Breast epithelium (tissue), 4 donors: ENCODE measurements at regions of chr19 and their contacts with region 1.

Region 1: GRCh38 chr19:11422163-11423021 is 3.3 kb upstream of the RGL3 start:
- DNase-seq: peak; percentile 78 to 88
- H3K4me3 ChIP-seq: peak overlapping the region; percentile 2 to 54 (median 42)
- H3K27ac ChIP-seq: peak overlapping the region; percentile 39 to 61
- H3K4me1 ChIP-seq: no peaks in the 10 kb centered on the region
- H3K27me3 ChIP-seq: peaks cover 4 to 21% of the 10 kb centered on the region in 2 donors
- CTCF ChIP-seq: no peak
- POLR2A ChIP-seq: no peak

Region 2: DNA sequence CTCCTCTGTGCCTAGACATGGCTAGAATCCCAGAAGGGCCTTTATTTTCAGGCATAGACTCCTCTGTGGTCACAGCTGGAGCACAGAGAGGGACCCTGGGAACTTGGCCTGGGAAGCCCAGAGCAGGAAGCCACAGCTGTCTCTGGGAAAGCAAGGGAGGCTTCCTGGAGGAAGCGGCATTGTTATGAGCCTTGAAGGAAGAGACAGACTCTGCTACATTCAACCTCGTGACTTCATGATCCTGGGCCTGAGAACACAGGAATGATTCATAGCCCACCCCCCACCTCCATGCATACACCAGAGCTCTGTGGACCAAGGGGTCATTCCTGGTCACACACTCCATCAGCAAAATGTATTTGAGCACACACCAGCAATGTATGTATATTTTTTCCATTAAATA is 1400.5 kb before region 1 on chr19:
- intact Hi-C with region 1: loop called (anchors 5 kb)
- DNase-seq: no peak
- H3K4me3 ChIP-seq: no peak overlapping the region
- H3K27ac ChIP-seq: no peak overlapping the region
- H3K4me1 ChIP-seq: no peaks in the 10 kb centered on the region
- H3K27me3 ChIP-seq: no peaks in the 10 kb centered on the region
- CTCF ChIP-seq: no peak
- POLR2A ChIP-seq: no peak

Region 3: GRCh38 chr19:11404588-11405222 is 17.7 kb before region 1 on chr19:
- intact Hi-C with region 1: no loop called
- DNase-seq: no peak
- H3K4me3 ChIP-seq: no peak overlapping the region
- H3K27ac ChIP-seq: no peak overlapping the region
- H3K4me1 ChIP-seq: no peaks in the 10 kb centered on the region
- H3K27me3 ChIP-seq: no peaks in the 10 kb centered on the region
- CTCF ChIP-seq: no peak
- POLR2A ChIP-seq: no peak

Region 4: DNA sequence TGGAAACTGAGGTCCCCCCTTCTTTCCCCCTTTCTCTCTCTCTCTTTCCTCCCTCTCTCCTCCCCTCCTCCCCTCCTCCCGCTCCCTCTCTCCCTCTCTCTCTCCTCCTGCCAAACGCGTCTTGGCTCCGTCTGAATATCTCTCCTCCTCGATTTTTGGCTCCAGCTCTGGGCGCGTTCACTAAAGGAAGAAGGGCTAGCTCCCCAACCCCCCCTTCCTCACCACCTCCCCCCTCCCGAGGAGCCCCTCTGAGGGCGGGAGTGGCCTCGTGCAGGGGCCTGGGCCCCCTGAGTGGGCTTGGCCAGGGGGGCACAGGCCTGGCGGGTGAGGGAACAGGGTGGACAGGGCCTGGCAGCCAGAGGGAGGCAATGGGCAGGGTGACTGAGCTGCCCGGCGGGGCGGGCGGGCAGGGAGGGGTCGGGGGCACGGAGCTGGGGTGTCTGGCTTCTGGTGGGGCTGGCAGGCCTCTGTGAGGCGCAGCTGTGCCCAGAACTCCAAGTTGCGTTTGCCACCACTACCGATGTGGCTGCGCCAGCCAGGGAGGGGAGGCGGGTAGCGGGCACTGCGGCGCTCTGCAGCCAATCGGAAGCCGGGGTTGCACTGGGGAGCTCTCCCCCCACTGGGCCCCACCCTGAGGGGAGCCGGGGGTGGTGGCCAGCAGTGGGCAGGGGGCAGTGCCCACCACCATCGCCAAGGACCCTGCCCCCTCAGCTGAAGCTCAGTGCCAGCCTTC is 1579.9 kb after region 1 on chr19:
- intact Hi-C with region 1: loop called (anchors 5 kb)
- DNase-seq: peak; percentile 80 to 84
- H3K4me3 ChIP-seq: peak overlapping the region; percentile 33 to 69 (median 50)
- H3K27ac ChIP-seq: peak overlapping the region; percentile 95 to 99
- H3K4me1 ChIP-seq: peaks cover 13 to 29% of the 10 kb centered on the region in 2 donors
- H3K27me3 ChIP-seq: no peaks in the 10 kb centered on the region
- CTCF ChIP-seq: no peak
- POLR2A ChIP-seq: no peak